Activated T-helper 2 cell treated with anti-CD3 and anti-CD28 coated beads, Interferon-gamma antibody, Interleukin-2, Interleukin-4, amounts not matched to agents 10 μg/mL and 5 μg/mL and 100 μg/mL, durations not matched to agents 14 hours and 24 hours and 36 hours (primary cell): ENCODE measurements at regions of chr12 and their contacts with region 1.

Region 1: GRCh38 chr12:54379401-54380201 is 4.9 kb downstream of the ZNF385A start:
- DNase-seq: peak; percentile 83
- H3K4me3 Mint-ChIP-seq: peak overlapping the region; percentile 65
- H3K27ac Mint-ChIP-seq: no peak overlapping the region
- H3K4me1 Mint-ChIP-seq: peaks cover 11% of the 10 kb centered on the region
- H3K27me3 Mint-ChIP-seq: peaks cover 12% of the 10 kb centered on the region

Region 2: DNA sequence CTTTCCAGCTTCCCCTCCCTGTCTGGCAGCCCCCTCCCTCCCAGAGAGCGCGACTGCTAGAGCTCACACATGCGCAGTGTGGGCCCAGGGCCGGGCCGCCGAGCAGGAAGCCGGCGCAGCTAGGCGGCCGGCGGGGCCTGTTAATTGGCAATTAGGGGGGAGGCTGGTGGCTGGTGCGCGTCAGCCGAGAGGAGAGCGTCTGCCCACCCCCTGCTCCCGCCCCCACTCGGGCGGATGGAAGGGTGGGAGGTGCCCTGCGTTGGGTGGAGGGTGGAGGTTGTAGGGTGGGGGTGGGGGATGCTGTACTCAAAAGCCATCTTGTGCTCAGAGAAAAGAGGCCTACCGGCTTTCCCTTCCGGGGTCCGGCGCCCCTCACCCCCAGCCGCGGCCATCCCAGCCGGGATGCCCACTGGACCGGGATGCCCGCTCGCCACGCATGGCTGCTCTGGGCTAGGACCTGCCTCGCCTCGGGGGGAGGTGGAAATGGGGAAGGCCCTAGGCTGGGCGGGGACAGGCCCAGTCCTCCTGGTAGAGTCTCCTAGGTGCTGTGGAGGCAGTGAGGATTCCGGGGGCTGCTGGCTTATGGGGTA is 361.6 kb before region 1 on chr12:
- intact Hi-C with region 1: loop called (anchors 10 kb)
- DNase-seq: peak; percentile 67
- H3K4me3 Mint-ChIP-seq: peak overlapping the region; percentile 81
- H3K27ac Mint-ChIP-seq: peak overlapping the region; percentile 18
- H3K4me1 Mint-ChIP-seq: peaks cover 17% of the 10 kb centered on the region
- H3K27me3 Mint-ChIP-seq: peaks cover 75% of the 10 kb centered on the region

Region 3: DNA sequence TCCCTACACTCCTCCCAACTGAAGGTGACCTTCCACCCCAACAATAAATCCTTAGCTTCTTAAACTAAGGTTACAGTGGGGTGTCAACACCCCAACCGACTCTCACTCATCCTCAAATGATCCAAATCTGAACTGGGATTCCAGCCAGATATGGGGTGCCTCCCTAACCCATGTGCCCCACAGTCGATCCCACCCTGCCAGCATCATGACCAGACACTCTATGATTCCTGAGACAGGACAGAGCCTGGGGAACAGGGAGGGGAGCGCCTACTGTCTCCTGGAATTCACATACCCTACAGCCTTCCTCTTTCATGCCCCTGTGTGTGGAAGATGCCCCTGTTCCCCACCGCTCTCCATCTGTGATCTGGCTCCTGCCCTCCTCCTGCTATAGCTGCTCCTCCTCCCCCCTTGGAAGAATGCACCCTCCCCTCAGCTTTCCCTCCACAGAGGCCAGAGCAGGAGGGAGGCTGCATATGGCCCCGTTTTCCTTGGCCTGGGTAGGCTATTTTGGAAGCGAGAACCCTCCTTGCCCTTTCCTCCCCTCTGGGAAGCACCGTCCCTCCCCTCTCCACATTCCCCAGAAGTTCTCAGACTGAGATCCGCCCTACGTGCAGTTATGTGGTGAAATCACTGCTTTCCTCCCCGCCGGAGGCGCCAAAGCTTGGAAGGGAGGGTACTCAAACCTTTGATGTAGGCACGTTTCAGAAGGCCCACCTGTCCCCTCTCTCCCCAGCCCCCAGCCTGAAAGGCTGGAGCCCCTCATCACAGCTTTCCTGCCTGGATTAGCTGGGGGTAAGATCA is 238.8 kb before region 1 on chr12:
- intact Hi-C with region 1: no loop called
- DNase-seq: no peak
- H3K4me3 Mint-ChIP-seq: no peak overlapping the region
- H3K27ac Mint-ChIP-seq: no peak overlapping the region
- H3K4me1 Mint-ChIP-seq: no peaks in the 10 kb centered on the region
- H3K27me3 Mint-ChIP-seq: peaks cover 42% of the 10 kb centered on the region

Region 4: DNA sequence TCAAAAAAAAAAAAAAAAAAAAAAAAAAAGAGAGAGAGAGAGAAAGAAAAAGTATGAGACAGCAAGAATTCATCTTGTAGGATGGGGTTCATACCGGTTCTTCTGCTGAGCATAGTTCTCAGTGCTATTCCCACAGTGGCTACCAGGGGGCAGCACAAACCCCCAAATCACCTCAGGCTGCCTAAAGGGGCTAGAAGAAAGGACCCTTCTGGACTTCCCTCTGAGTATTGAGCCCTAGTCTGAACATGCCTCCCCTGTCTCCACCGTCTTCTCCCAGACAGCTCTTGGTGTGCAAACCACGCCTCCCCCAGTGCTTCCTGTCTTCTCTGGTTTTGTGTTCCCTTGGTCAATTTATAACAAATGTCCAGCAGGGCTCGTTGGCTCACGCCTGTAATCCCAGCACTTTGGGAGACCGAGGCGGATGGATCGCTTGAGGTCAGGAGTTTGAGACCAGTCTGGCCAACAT is 159.5 kb before region 1 on chr12:
- intact Hi-C with region 1: loop called (anchors 1 kb)
- DNase-seq: peak; percentile 61
- H3K4me3 Mint-ChIP-seq: no peak overlapping the region
- H3K27ac Mint-ChIP-seq: no peak overlapping the region
- H3K4me1 Mint-ChIP-seq: peaks cover 18% of the 10 kb centered on the region
- H3K27me3 Mint-ChIP-seq: peaks cover 4% of the 10 kb centered on the region

Region 5: GRCh38 chr12:54463034-54463433 is 83.4 kb after region 1 on chr12:
- intact Hi-C with region 1: no loop called
- DNase-seq: no peak
- H3K4me3 Mint-ChIP-seq: no peak overlapping the region
- H3K27ac Mint-ChIP-seq: no peak overlapping the region
- H3K4me1 Mint-ChIP-seq: no peaks in the 10 kb centered on the region
- H3K27me3 Mint-ChIP-seq: peaks cover 29% of the 10 kb centered on the region